ENCODE measurements at regions of chr1 and their contacts with region 1.

Region 1: GRCh38 chr1:99645699-99646531 is at the start of gene PALMD:
- DNase-seq: peak; percentile 48 to 61
- ATAC-seq: peak; percentile 22 to 80 (median 66)
- H3K4me3 ChIP-seq: peak within 1 kb of the TSS; percentile 50 to 75 (median 59)
- H3K27ac ChIP-seq: peak within 1 kb of the TSS; percentile 84 to 99 (median 94)
- H3K4me1 ChIP-seq: peaks cover 4 to 48% (median 31%) of the 10 kb centered on the region in 9 donors
- H3K27me3 ChIP-seq: no peaks in the 10 kb centered on the region
- CTCF ChIP-seq: no peak
- total RNA-seq, gene PALMD: 82.5 to 173 (median 121) TPM

Region 2: GRCh38 chr1:99326215-99326949 is 319.5 kb before region 1 on chr1:
- intact Hi-C with region 1: no loop called
- DNase-seq: no peak
- ATAC-seq: no peak
- H3K4me3 ChIP-seq: no peak overlapping the region
- H3K27ac ChIP-seq: no peak overlapping the region
- H3K4me1 ChIP-seq: peaks cover 0 to 4% (median 0%) of the 10 kb centered on the region in 9 donors
- H3K27me3 ChIP-seq: no peaks in the 10 kb centered on the region
- CTCF ChIP-seq: peak in 7 of 9 donors; percentile 31 to 53 (median 34)

Region 3: DNA sequence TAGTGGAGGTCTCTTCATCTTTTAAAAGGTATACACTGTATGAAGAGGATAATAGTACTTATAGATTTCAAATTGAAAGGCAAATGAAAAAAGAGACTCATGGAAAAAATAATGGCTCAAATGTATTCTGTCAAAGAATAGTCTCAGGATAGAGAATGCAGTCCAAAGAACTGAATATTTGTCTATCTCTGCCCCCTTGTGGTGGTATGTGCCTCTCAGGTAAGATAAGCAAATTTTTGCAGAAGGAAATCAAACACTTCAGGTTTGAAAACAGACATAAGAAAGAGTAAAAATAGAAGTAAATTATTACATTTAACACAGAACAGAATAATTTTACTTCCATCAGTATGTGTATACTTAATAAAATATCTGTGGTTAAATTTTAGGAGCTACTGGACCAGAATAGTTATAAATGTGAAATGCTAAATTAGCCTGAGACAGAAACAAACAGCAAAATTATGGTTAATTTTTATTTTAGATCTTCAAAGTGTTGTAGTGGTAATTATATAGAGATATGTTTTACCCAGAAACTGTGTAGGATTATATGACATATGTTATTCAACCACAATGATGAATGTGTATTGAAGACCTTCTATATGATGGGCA is 164.4 kb before region 1 on chr1:
- intact Hi-C with region 1: loop called in 2 of 10 experiments (anchors 5 to 10 kb)
- DNase-seq: peak in 1 of 2 donors; percentile 71
- ATAC-seq: peak in 7 of 8 donors; percentile 52 to 76 (median 67)
- H3K4me3 ChIP-seq: no peak overlapping the region
- H3K27ac ChIP-seq: no peak overlapping the region
- H3K4me1 ChIP-seq: peaks cover 0 to 4% (median 0%) of the 10 kb centered on the region in 9 donors
- H3K27me3 ChIP-seq: no peaks in the 10 kb centered on the region
- CTCF ChIP-seq: peak; percentile 56 to 91 (median 81)

Region 4: DNA sequence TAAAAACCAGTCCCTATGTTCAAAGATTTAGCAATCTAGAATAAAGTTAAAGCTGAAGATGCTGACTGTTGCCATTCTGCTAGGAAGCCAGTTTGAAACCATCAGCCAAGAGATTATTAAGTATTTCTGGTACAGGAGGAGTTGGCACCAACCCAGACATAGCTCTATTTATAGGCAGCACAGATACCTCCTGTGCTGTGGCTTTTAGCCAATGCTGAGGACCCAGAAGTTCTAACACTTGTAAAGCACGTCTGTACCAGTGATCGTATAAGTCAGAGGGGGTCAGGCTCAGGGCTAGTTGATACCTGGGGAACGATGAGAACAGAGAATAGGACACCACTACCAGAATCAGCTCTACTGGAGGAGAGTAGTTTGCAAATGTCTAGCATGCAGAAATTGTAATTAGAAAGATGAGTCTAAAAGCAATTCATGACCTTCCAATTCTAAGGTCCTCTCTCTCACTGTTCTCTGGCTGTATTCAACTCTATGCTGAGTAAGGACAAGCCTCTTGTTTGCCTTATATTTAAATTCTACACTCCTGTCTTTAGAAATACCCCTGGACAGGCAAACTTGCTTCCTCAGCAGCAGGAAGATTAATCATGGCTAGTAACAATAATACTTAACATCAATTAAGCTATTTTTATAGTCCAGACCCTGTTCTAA is 96.8 kb before region 1 on chr1:
- intact Hi-C with region 1: loop called in 2 of 10 experiments (anchors 5 kb)
- DNase-seq: peak in 1 of 2 donors; percentile 82
- ATAC-seq: peak; percentile 82 to 100 (median 98)
- H3K4me3 ChIP-seq: peak overlapping the region in 2 of 10 donors; percentile 2 to 15
- H3K27ac ChIP-seq: peak overlapping the region in 9 of 10 donors; percentile 24 to 70 (median 60)
- H3K4me1 ChIP-seq: peaks cover 0 to 28% (median 13%) of the 10 kb centered on the region in 9 donors
- H3K27me3 ChIP-seq: no peaks in the 10 kb centered on the region
- CTCF ChIP-seq: no peak

Region 5: DNA sequence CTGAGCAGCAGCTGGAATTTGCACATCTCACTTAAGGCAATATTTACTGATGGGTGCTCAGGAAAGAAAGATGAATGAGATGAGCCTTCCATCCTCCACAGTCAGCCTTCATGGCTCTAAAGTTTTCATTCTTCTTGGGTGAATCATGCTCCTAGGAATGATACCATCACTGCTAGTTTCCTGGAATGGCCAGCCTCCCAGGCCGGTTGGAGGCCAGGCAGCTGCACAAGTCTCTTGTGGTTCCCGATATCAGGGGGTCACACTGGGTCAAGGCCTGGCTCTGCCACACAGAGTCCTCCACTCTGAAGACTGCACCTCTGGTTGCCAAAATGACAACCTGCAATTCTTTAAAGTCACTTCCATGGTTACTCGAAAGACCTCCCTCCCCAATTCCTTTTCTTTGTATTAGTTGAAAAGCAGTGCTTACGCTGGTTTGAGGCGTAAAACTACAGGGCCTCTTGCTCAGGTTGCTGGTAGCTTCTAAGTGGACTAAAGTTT is 46.2 kb before region 1 on chr1:
- intact Hi-C with region 1: loop called in 4 of 10 experiments (anchors 2 to 10 kb)
- DNase-seq: peak; percentile 12 to 48
- ATAC-seq: peak in 7 of 8 donors; percentile 41 to 87 (median 53)
- H3K4me3 ChIP-seq: no peak overlapping the region
- H3K27ac ChIP-seq: peak overlapping the region in 9 of 10 donors; percentile 11 to 72 (median 58)
- H3K4me1 ChIP-seq: peaks cover 2 to 63% (median 30%) of the 10 kb centered on the region in 9 donors
- H3K27me3 ChIP-seq: no peaks in the 10 kb centered on the region
- CTCF ChIP-seq: no peak

Region 6: DNA sequence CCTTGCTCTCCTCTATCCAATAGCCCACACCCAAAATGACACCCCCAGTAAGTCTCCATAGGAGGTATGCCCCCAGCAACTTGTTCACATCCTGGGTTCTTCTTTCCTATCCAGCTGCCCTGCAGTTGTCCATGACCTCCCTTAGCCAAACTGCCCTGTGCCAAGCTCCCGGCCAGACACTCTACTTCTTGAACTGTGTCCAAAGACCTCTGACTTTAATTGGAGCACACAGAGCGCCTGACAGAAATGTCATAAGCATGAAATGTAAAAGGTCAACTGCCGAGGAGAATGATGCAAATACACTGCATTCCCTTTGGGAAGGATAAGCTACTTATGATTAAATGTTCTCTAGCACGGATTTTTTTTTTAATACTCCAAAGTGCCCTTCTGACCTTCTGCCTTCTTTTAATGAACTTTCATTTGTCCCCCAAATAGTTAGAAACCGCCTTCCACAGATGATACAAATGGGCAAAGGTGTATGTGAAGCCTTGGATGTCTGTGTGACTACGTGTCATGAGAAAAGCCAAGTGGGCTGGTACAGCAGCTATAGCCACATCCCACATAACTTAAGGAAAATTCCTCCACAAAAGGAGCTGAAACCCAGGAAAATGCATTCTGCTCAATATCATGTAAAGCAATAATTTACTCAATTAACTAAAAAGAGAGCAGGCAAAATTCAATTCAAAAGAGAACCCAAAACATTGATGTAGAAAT is 26.7 kb after region 1 on chr1:
- intact Hi-C with region 1: loop called in 1 of 10 experiments (anchors 1 kb)
- DNase-seq: peak; percentile 38 to 70
- ATAC-seq: peak; percentile 59 to 90 (median 85)
- H3K4me3 ChIP-seq: no peak overlapping the region
- H3K27ac ChIP-seq: peak overlapping the region; percentile 51 to 99 (median 79)
- H3K4me1 ChIP-seq: peaks cover 6 to 99% (median 83%) of the 10 kb centered on the region in 9 donors
- H3K27me3 ChIP-seq: no peaks in the 10 kb centered on the region
- CTCF ChIP-seq: no peak

Region 7: DNA sequence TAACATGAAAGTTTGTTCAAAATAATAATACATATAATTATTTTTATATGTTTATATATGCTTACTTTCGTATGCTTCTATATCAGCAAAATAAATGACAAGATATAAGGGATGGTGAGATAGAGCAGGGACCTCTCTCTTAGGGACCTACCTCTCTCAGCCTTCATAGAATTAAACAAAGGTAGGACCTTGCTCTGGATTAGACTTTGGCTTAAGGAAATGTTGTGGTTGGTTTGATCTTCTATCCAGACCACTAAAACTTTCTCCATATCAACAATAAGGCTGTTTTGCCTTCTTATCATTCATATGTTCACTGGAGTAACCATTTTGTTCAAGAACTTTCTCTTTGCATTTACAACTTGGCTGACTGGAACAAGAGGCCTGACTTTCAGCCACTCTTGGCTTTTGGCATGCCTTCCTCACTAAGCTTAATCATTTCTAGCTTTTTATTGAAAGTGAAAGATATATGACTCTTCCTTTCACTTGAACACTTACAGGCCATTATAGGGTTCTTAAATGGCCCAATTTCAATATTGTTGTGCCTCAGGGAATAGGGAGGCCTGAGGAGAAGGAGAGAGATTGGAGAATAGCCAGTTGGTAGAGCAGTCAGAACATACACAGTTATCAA is 106.1 kb after region 1 on chr1:
- intact Hi-C with region 1: no loop called
- DNase-seq: no peak
- ATAC-seq: no peak
- H3K4me3 ChIP-seq: no peak overlapping the region
- H3K27ac ChIP-seq: no peak overlapping the region
- H3K4me1 ChIP-seq: peaks cover 0 to 14% (median 0%) of the 10 kb centered on the region in 9 donors
- H3K27me3 ChIP-seq: no peaks in the 10 kb centered on the region
- CTCF ChIP-seq: no peak